ENCODE measurements at regions of chrX and their contacts with region 1.

Region 1: DNA sequence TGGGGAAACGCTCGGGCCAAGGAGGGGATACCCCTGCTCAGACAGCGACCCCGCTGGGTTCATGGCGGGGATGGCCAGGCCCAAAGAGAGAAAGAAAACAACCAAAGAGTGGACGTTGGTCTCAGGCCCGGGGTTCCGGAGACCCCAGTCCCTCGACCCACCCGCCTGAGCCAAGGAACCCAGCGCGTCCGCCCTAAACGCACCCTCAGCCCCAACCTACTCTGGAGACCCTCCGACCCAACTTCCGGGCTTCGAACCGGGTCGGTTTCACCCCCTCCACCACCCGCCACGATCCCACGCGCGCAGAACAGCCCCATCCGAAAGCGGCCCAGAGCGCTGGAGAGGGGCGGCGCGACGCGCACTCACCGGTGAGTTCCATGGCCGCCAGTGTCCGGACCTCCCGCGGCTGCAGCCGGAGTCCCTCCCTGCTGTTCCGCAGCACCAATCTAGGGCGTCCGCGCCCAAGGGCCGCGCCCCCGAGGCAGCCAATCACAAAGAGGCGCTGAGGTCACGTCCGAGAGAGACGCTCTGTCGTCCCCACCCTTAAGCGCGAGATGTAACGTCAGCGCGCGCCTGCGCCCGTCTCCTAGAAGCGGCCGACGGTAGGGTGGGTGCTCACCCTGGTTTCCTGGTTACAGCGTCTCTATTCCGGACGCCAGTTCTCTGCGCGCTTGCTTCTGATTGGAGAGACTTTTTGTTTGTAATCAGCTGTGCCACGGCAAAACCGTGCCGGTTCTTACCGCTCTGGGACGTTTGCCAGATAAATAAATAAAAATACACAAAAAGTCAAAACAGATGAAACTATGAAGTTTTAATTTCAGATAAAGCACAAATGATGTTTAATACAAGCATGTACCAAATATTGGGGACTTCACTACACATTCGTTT is at the start of gene PIGA:
- DNase-seq: peak; percentile 94
- H3K4me3 Mint-ChIP-seq: peak within 1 kb of the TSS; percentile 90
- H3K27ac Mint-ChIP-seq: peak within 1 kb of the TSS; percentile 88
- H3K4me1 Mint-ChIP-seq: peaks cover 13% of the 10 kb centered on the region
- H3K27me3 Mint-ChIP-seq: peaks cover 2% of the 10 kb centered on the region
- total RNA-seq, gene PIGA: 31.1 to 36.7 TPM

Region 2: DNA sequence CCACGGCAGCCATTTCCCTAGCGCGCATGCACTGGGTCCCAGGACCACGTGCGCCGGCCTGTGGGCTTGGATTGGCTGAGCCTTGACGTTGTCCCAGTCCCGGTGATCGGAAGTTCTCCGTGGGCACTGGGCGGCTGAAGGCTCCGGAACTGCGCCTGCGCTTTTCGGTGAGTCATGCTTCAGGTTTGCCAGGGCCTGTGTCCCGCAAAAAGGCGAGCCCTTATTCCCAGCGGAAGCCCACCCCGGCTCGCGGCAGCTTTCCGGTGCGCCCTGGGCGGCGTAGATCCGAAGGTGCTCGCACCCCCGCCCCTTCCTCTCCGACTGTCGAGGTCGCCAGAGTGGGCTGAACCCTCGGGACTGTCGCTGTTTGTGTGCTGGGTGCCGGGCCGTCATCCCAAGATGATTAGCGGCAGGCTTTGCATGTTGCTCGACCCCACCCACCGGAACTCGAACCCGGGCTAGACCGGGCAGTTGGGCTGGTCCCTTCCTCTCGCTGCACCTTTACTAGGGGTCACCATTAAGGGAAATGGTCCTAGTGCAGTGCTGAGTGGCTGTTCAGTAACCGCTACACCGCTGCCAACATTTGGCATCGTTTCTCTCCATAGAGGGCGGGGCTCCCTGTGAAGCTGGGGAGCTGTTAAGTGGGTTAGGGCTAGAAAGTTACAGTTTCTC is 1682.2 kb before region 1 on chrX and contains the start of gene TCEANC:
- CTCF ChIA-PET with region 1: no interaction called
- POLR2A ChIA-PET with region 1: no interaction called
- intact Hi-C with region 1: loop called (anchors 5 kb)
- DNase-seq: peak; percentile 96
- H3K4me3 Mint-ChIP-seq: peak within 1 kb of the TSS; percentile 84
- H3K27ac Mint-ChIP-seq: peak within 1 kb of the TSS; percentile 93
- H3K4me1 Mint-ChIP-seq: peaks cover 22% of the 10 kb centered on the region
- H3K27me3 Mint-ChIP-seq: no peaks in the 10 kb centered on the region
- total RNA-seq, gene TCEANC: 1.9 TPM

Region 3: GRCh38 chrX:14872851-14873675 is 462.3 kb before region 1 on chrX and contains the starts of genes FANCB and MOSPD2:
- CTCF ChIA-PET with region 1: no interaction called
- POLR2A ChIA-PET with region 1: no interaction called
- intact Hi-C with region 1: loop called (anchors 1 kb)
- DNase-seq: peak; percentile 96
- H3K4me3 Mint-ChIP-seq: peak within 1 kb of the TSS; percentile 79
- H3K27ac Mint-ChIP-seq: peak within 1 kb of the TSS; percentile 80
- H3K4me1 Mint-ChIP-seq: peaks cover 15% of the 10 kb centered on the region
- H3K27me3 Mint-ChIP-seq: no peaks in the 10 kb centered on the region
- total RNA-seq, gene FANCB: 12.0 to 16.2 TPM
- total RNA-seq, gene MOSPD2: 12.6 to 13.7 TPM

Region 4: GRCh38 chrX:15269618-15270521 is 65.5 kb before region 1 on chrX and contains the start of gene ASB9:
- CTCF ChIA-PET with region 1: no interaction called
- POLR2A ChIA-PET with region 1: no interaction called
- intact Hi-C with region 1: no loop called
- DNase-seq: peak; percentile 15
- H3K4me3 Mint-ChIP-seq: no peak within 1 kb of the TSS
- H3K27ac Mint-ChIP-seq: no peak within 1 kb of the TSS
- H3K4me1 Mint-ChIP-seq: peaks cover 10% of the 10 kb centered on the region
- H3K27me3 Mint-ChIP-seq: no peaks in the 10 kb centered on the region
- total RNA-seq, gene ASB9: 0.43 to 0.48 TPM

Region 5: GRCh38 chrX:15299941-15300851 is 35.2 kb before region 1 on chrX:
- CTCF ChIA-PET with region 1: no interaction called
- POLR2A ChIA-PET with region 1: no interaction called
- intact Hi-C with region 1: loop called (anchors 1 kb)
- DNase-seq: no peak
- H3K4me3 Mint-ChIP-seq: no peak overlapping the region
- H3K27ac Mint-ChIP-seq: no peak overlapping the region
- H3K4me1 Mint-ChIP-seq: peaks cover 8% of the 10 kb centered on the region
- H3K27me3 Mint-ChIP-seq: no peaks in the 10 kb centered on the region

Region 6: DNA sequence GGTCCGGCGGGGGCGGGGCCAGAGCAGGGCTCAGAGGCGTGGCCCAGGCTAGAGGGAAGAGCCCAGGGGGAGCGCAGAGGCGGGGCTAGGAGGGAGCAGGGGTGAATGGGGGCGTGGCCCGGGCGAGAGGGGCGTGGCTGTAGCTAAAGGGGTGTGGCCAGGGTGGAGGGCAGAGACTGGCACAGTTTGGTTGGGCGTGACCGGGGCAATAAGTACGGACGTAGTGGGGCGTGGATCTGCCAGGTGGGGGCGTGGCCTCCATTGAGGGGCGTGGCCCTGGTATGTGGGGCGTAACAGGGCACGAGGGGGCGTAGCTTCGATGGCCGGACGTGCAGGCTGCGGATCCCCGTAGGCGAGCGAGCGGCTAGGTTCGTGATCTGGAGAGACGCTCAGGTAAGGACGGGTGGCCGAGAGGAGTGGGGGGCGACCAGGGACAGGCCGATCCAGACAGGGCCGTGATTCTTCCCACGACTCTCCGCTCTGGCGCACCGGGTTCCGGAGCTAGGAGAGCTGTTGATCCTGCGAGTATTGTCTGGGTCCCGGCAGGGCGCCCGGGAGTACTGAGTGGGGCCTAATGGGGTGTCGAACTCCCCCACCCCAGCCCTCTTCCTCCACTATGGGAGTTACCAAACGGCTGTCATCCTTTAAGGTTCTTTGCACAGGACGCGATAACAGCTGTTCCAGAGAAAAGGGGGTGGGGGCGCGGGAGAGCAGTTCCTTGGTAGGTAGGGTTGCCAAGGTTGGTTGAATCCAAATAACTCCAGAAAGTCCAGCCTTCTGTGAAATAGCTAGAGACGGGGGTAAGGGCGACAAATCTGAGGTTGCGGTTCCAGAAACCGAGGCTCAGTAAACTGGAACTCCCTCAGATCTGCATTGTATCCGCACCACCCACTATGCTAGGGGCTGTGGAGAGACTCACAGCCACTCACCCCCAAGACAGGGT is 402.9 kb after region 1 on chrX and contains the start of gene CA5B:
- CTCF ChIA-PET with region 1: no interaction called
- POLR2A ChIA-PET with region 1: interaction called, 3 read pairs
- intact Hi-C with region 1: loop called (anchors 5 kb)
- DNase-seq: peak; percentile 97
- H3K4me3 Mint-ChIP-seq: peak within 1 kb of the TSS; percentile 87
- H3K27ac Mint-ChIP-seq: peak within 1 kb of the TSS; percentile 80
- H3K4me1 Mint-ChIP-seq: peaks cover 38% of the 10 kb centered on the region
- H3K27me3 Mint-ChIP-seq: no peaks in the 10 kb centered on the region
- total RNA-seq, gene CA5B: 13.1 to 15.5 TPM

Region 7: DNA sequence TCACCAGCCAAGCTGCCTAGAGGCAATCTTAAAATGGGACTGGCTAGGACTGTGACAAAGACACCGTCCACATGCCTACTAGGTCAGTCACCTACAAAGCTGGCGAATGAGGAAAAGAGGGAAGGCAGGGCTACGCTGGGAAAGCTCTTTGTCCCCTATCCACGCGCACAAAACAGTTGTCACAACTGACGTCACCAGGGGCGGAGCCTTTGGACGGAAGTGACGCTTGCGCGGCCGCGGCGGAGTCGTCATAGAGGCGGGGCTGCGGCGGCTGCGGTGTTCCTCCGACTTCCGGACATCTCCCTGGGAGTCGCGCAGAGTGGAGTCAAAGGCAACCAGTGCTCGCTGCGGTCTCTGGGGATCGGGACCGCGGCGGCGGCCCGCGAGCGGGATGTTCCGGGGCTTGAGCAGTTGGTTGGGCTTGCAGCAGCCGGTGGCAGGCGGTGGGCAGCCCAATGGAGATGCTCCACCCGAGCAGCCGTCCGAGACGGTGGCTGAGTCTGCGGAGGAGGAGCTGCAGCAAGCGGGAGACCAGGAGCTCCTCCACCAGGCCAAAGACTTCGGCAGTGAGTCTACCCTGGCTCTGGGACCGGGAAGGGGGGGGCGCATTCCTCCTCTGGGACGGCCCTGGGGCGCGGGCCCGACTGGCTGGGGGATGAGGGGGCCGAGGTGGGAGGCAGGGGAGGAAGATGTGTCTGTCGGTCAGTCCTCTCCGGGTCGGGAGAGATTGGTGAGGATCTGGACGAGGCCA is 1384.1 kb after region 1 on chrX and contains the start of gene SYAP1:
- CTCF ChIA-PET with region 1: no interaction called
- POLR2A ChIA-PET with region 1: no interaction called
- intact Hi-C with region 1: loop called (anchors 10 kb)
- DNase-seq: peak; percentile 94
- H3K4me3 Mint-ChIP-seq: peak within 1 kb of the TSS; percentile 92
- H3K27ac Mint-ChIP-seq: peak within 1 kb of the TSS; percentile 89
- H3K4me1 Mint-ChIP-seq: peaks cover 18% of the 10 kb centered on the region
- H3K27me3 Mint-ChIP-seq: no peaks in the 10 kb centered on the region
- total RNA-seq, gene SYAP1: 20.8 to 22.4 TPM